Mammary epithelial cell (primary cell): ENCODE measurements at regions of chr3 and their contacts with region 1.

Region 1: DNA sequence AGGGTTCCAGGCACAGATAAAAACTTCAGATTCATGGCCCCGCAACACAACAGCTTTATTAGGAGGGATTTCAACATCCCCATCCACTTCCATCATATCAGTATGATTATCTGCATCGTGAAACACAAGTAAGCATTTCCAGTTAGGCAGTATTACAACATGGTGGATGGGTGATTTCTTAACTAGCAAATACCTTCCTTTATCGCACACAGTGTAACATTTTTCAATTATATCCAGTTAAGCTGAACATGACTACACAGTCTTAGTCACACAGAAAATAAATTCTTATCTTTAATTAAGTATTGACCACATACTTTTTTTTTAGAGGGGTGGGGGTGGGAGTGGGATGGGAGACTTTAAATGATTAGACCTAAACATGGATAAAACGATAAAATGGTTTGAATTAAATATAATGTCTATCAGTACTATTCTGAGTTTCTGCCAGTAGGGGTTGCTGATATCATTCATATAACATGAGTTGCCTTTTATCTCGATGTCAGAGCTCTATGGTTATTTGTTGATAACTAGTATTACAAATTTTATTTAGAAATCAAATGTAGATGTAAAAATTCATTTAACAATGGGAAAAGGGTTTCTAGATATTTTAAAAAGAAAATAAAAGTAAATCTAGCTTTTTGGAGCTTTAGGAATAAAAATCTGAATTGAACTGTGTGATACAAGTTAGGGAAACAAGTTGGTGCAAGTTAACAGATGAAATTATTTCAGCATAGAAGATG is 146.6 kb downstream of the TBL1XR1 start:
- DNase-seq: peak; percentile 24
- H3K4me3 ChIP-seq: no peak overlapping the region
- H3K27ac ChIP-seq: peak overlapping the region; percentile 22
- H3K4me1 ChIP-seq: peaks cover 8% of the 10 kb centered on the region
- H3K27me3 ChIP-seq: no peaks in the 10 kb centered on the region
- CTCF ChIP-seq: peak; percentile 40 to 54

Region 2: GRCh38 chr3:177538048-177538749 is 487.5 kb after region 1 on chr3:
- CTCF ChIA-PET with region 1: interaction called, 18 read pairs
- dilution Hi-C with region 1: no loop called
- in situ Hi-C with region 1: no loop called
- intact Hi-C with region 1: no loop called
- DNase-seq: peak; percentile 22
- H3K4me3 ChIP-seq: no peak overlapping the region
- H3K27ac ChIP-seq: no peak overlapping the region
- H3K4me1 ChIP-seq: peaks cover 5% of the 10 kb centered on the region
- H3K27me3 ChIP-seq: no peaks in the 10 kb centered on the region
- CTCF ChIP-seq: no peak